H1 (cell line): ENCODE measurements at regions of chr10 and their contacts with region 1.

Region 1: DNA sequence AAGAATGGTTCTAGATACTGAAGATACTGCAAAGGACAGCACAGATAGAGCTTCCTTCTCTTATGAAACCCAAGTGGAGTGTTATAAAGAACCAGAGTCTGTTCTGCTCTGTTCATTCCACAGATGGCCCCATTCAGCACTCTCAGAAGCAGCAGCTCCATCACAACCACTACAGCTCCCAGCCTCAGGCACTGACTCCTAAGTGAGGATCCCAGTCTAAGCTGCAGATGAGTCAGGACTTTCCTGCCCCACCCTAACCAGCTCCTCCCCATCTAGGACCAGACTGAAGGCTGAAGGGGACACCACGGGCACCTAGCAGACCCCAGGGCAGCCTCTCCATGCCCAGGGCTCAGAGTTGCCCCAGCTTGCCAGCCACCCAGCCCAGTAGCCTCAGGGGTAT is 379.8 kb downstream of the GRID1 start:
- DNase-seq: no peak
- H3K4me3 ChIP-seq: no peak overlapping the region
- H3K27ac ChIP-seq: no peak overlapping the region
- H3K4me1 ChIP-seq: no peaks in the 10 kb centered on the region
- H3K27me3 ChIP-seq: peaks cover 0 to 2% (median 0%) of the 10 kb centered on the region in 4 experiments; a peak in 1 of 7 replicates
- CTCF ChIP-seq: no peak
- EP300 ChIP-seq: no peak
- POLR2A ChIP-seq: no peak
- RAD21 ChIP-seq: no peak

Region 2: GRCh38 chr10:85976267-85976793 is 10.4 kb before region 1 on chr10:
- CTCF ChIA-PET with region 1: interaction called, 14 read pairs
- POLR2A ChIA-PET with region 1: no interaction called
- DNase-seq: no peak
- H3K4me3 ChIP-seq: no peak overlapping the region
- H3K27ac ChIP-seq: no peak overlapping the region
- H3K4me1 ChIP-seq: peaks cover 0 to 4% (median 0%) of the 10 kb centered on the region in 4 experiments; a peak in 1 of 7 replicates
- H3K27me3 ChIP-seq: no peaks in the 10 kb centered on the region
- CTCF ChIP-seq: peak; percentile 30 to 67 (median 31); a peak in 3 of 4 replicates
- EP300 ChIP-seq: no peak
- POLR2A ChIP-seq: no peak
- RAD21 ChIP-seq: peak; percentile 59 to 64

Region 3: DNA sequence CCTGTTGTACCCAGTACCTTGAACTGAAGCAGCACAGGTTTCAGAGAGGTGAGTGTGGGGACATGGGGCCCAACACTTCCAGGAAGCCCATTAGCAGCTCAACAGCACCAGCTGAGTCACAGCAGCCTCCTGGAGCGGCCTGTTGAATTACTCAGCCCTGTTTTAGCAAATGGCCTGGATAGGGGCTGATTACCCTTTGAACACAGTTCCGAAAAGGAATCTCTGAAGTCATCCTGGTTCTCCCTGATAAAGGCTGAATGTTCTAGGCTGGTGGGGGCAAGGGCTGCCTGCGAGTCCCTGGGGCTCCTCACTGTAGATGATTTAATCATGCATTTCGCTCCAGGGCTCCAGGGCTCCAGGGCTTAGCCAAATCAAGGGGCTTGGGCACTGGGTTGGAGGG is 92.3 kb after region 1 on chr10:
- CTCF ChIA-PET with region 1: no interaction called
- POLR2A ChIA-PET with region 1: no interaction called
- DNase-seq: peak; percentile 48 to 50
- H3K4me3 ChIP-seq: no peak overlapping the region
- H3K27ac ChIP-seq: no peak overlapping the region
- H3K4me1 ChIP-seq: peaks cover 0 to 8% (median 5%) of the 10 kb centered on the region in 4 experiments; a peak in 4 of 7 replicates
- H3K27me3 ChIP-seq: no peaks in the 10 kb centered on the region
- CTCF ChIP-seq: no peak
- EP300 ChIP-seq: no peak
- POLR2A ChIP-seq: no peak
- RAD21 ChIP-seq: no peak